Heart left ventricle (tissue), 16 donors: ENCODE measurements at regions of chr6 and their contacts with region 1.

Region 1: GRCh38 chr6:119096721-119097565 is 18.5 kb upstream of the FAM184A start:
- DNase-seq: peak; percentile 68 to 83 (median 77)
- ATAC-seq: peak; percentile 73 to 98 (median 90)
- H3K4me3 ChIP-seq: no peak overlapping the region
- H3K27ac ChIP-seq: peak overlapping the region in 11 of 12 donors; percentile 20 to 70 (median 52)
- H3K4me1 ChIP-seq: peaks cover 0 to 16% (median 6%) of the 10 kb centered on the region in 12 donors
- H3K27me3 ChIP-seq: no peaks in the 10 kb centered on the region
- CTCF ChIP-seq: no peak
- POLR2A ChIP-seq: no peak

Region 2: DNA sequence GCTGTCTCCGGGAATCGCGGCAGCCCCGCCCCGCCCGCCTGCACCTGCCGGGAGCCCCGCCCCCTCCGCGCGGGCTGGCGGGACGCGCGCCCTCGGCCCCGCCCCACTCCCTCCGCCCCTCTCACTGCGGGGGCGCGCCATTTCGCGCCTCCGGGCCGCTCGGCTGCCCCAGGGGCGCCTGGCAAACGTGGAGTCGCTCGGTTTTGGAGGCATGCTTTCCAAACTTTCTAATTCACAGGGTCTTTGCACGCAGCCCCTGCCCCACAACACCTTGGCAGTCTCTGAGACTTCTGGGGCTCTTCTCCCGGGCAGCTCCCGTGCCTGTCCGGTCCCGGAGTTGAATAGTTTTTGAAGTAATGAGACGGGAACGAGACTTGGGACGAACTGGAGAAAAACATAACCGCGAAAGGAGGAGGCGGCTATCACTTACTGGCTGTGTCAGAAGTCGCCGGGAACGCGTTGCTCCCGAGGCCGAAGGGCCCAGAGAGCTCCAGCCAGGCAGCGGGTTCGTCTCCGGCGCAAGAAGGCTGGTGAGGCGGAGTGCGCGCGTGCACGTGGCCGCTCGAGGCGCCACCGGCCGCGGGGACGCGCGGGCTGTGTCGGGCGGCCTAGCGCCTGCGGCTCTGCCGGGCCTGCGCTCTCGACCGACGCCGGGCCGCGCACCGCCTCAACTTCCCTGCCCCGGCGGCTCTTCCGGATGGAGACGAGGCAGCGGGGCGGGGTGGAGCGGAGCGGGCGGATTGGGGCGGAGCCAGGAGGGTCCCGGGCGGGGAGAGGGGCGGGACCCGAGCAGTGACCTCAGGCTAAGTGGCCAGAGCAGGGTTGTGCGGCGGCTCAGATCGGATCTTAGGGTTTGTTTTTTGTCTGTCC is 162.2 kb before region 1 on chr6 and contains the start of gene MCM9:
- intact Hi-C with region 1: no loop called
- DNase-seq: peak; percentile 94 to 95 (median 95)
- ATAC-seq: peak; percentile 93 to 99 (median 98)
- H3K4me3 ChIP-seq: peak within 1 kb of the TSS; percentile 64 to 98 (median 81)
- H3K27ac ChIP-seq: peak within 1 kb of the TSS; percentile 86 to 98 (median 93)
- H3K4me1 ChIP-seq: peaks cover 0 to 21% (median 6%) of the 10 kb centered on the region in 12 donors
- H3K27me3 ChIP-seq: no peaks in the 10 kb centered on the region
- CTCF ChIP-seq: no peak
- POLR2A ChIP-seq: peak in 1 of 2 donors; percentile 81
- total RNA-seq, gene MCM9: 2.2 to 8.5 (median 4.9) TPM

Region 3: GRCh38 chr6:118974790-118975189 is 122.2 kb before region 1 on chr6:
- intact Hi-C with region 1: loop called in 1 of 10 experiments (anchors 5 kb)
- DNase-seq: no peak
- ATAC-seq: no peak
- H3K4me3 ChIP-seq: no peak overlapping the region
- H3K27ac ChIP-seq: no peak overlapping the region
- H3K4me1 ChIP-seq: no peaks in the 10 kb centered on the region
- H3K27me3 ChIP-seq: no peaks in the 10 kb centered on the region
- CTCF ChIP-seq: no peak
- POLR2A ChIP-seq: no peak